BJ (cell line): ENCODE measurements at regions of chr1 and their contacts with region 1.

Region 1: DNA sequence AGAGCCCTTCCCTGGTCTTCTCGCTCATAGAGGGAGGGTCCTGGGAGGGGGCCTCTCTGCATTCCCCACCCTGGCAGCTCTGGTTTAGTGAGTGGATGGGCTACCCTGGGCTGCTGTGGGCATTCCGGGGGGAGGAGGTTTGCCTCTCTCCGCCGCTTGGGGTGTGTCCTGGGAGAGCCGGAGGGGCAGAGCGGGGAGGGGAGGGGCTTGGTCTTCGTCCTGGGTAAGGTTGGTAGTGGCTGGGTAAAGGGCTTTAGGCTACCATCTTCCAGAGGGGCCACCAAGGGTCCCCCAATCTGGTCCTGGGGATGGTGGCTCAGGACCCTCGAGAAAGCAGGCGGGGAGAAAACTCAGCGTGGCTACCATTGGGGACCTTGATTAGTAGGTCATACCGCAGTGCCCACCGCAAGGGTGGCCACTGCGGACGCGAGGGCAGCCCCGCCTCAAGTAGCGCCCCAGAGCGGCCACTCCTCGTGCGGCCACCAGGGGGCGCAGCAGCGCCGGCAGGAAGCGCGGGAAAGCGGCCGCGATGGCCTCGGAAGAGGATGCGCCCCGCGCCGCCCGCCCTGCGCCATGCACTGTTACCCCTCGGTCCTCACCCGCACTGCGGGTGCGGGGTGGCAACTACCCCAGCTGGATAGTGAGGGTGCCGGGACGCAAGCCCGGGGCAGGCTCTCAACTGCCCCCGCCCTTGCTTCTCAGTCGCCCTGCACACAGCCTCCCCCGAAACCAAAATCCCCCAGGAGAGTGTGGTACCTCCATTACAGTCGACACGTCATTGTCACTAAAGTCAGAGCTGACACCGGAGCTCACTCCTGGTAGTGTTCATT is 44.1 kb upstream of the SLC25A33 start:
- DNase-seq: no peak
- H3K4me3 ChIP-seq: peak overlapping the region; percentile 27; the same call in 1 of the 2 replicates
- H3K27me3 ChIP-seq: no peaks in the 10 kb centered on the region; the same call in 1 of the 2 replicates
- CTCF ChIP-seq: peak; percentile 81

Region 2: GRCh38 chr1:9110669-9111356 is 384.3 kb before region 1 on chr1:
- CTCF ChIA-PET with region 1: interaction called, 29 read pairs
- POLR2A ChIA-PET with region 1: no interaction called
- DNase-seq: no peak
- H3K4me3 ChIP-seq: no peak overlapping the region
- H3K27me3 ChIP-seq: no peaks in the 10 kb centered on the region
- CTCF ChIP-seq: peak; percentile 94

Region 3: GRCh38 chr1:9275567-9276034 is 219.5 kb before region 1 on chr1:
- CTCF ChIA-PET with region 1: interaction called, 86 read pairs
- POLR2A ChIA-PET with region 1: no interaction called
- DNase-seq: no peak
- H3K4me3 ChIP-seq: no peak overlapping the region
- H3K27me3 ChIP-seq: no peaks in the 10 kb centered on the region
- CTCF ChIP-seq: no peak

Region 4: DNA sequence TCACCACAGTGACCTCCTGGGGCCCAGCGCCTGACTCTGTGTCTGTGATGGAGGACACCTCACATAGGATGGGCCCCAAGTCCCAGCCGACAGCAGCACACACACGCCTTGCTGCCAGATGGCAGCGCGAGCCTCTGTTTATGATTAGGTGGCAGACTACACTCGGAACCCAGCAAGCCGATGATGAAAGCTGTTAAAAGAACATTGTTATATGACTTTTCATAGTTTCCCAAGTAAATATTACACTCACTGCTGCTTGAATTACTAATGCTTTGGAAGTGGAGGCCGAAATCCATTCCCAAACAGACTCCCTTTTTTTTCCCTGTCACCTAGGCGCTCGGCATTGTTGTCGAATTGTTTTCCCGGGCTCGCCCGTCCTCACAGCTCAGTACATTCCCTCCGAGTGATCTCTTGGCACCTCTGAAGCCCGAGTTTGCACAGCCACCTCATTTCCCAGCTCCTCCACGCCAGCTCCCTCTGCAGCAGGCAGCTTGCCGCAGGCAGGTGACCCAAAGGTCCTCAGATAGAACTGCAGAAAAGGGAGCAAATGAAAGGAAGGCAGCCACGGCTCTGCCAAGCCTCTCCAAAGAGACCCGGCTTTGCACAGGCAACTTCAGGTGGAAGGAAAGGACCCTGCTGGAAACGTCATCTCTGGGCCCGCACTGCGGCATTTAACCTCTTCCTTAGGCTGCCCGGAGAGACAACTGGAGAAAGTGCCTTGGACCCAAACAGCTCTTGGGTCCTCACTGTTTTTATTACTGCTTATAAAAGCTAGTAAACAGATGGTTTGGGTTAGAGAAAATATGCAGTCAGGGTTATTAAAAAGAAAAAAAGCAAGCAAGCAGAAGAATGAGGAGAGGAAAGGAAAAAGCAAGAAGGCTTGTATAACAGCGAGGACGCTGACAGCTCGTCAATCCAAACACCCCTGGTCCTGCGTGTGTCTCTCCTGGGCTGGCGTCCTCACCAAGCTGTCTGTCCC is 28.1 kb before region 1 on chr1:
- CTCF ChIA-PET with region 1: interaction called, 13 read pairs
- POLR2A ChIA-PET with region 1: no interaction called
- DNase-seq: peak; percentile 44
- H3K4me3 ChIP-seq: peak overlapping the region; percentile 14; the same call in 1 of the 2 replicates
- H3K27me3 ChIP-seq: peaks cover 7% of the 10 kb centered on the region
- CTCF ChIP-seq: no peak

Region 5: GRCh38 chr1:9573723-9574122 is 78.6 kb after region 1 on chr1:
- CTCF ChIA-PET with region 1: interaction called, 40 read pairs
- POLR2A ChIA-PET with region 1: no interaction called
- DNase-seq: no peak
- H3K4me3 ChIP-seq: no peak overlapping the region
- H3K27me3 ChIP-seq: no peaks in the 10 kb centered on the region
- CTCF ChIP-seq: peak; percentile 44

Region 6: GRCh38 chr1:9651565-9652378 is 156.6 kb after region 1 on chr1 and contains the start of gene PIK3CD:
- CTCF ChIA-PET with region 1: no interaction called
- POLR2A ChIA-PET with region 1: no interaction called
- DNase-seq: no peak
- H3K4me3 ChIP-seq: peak within 1 kb of the TSS; percentile 52
- H3K27me3 ChIP-seq: no peaks in the 10 kb centered on the region; the same call in 1 of the 2 replicates
- CTCF ChIP-seq: no peak
- polyA plus RNA-seq, gene PIK3CD: 5.8 and 9.2 TPM in 2 replicates